BJ (cell line): ENCODE measurements at regions of chr14 and their contacts with region 1.

Region 1: GRCh38 chr14:34227834-34228649 is 234.0 kb downstream of the SPTSSA start:
- DNase-seq: no peak
- H3K4me3 ChIP-seq: no peak overlapping the region
- H3K27me3 ChIP-seq: no peaks in the 10 kb centered on the region
- CTCF ChIP-seq: peak; percentile 81

Region 2: DNA sequence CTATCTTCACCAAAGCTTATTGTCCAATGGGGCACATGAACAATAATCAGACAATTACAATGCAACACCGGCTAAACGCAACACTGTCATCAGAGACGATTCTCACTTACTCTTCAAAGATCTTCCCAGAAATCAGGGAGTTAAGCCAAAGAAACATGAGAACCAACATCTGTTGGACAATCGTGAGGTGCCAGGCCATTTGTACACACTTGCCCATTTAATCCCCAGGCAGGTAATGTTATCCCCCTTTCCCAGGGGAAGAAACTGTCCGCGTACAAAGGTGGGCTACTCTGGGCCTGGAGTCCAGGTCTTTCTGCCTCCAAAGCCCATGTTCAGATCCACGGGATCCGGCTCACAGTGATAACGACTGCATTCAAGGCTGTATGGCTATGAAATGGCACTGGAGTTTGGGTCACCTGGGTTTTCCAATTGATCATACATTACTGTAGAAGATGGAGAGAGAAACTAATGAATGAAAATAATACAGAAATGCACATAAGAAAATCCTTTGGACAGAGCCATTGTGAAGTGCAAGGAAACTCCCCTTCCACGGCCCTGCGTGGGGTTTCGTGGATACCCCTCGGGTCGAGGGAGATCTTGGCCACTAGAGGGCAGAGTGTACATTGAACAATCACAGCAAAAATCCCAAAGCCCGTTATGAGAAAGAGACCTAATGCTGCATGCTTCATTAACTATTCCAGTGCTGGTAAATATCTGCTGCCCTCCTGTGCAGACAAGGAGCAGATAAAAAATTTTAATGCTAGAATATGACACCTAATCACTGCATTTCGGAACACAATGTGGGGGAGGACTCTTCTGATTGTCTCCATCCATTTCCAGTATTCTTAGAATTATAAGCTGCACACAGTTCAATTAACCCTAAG is 388.6 kb before region 1 on chr14:
- CTCF ChIA-PET with region 1: interaction called, 27 read pairs
- POLR2A ChIA-PET with region 1: no interaction called
- DNase-seq: no peak
- H3K4me3 ChIP-seq: no peak overlapping the region
- H3K27me3 ChIP-seq: peaks cover 3% of the 10 kb centered on the region; the same call in 1 of the 2 replicates
- CTCF ChIP-seq: peak; percentile 81

Region 3: GRCh38 chr14:33848706-33849454 is 379.2 kb before region 1 on chr14:
- CTCF ChIA-PET with region 1: interaction called, 18 read pairs
- POLR2A ChIA-PET with region 1: no interaction called
- DNase-seq: no peak
- H3K4me3 ChIP-seq: no peak overlapping the region
- H3K27me3 ChIP-seq: peaks cover 4% of the 10 kb centered on the region; the same call in 1 of the 2 replicates
- CTCF ChIP-seq: peak; percentile 63

Region 4: GRCh38 chr14:34379816-34380463 is 151.9 kb after region 1 on chr14:
- CTCF ChIA-PET with region 1: no interaction called
- POLR2A ChIA-PET with region 1: no interaction called
- DNase-seq: no peak
- H3K4me3 ChIP-seq: no peak overlapping the region
- H3K27me3 ChIP-seq: peaks cover 5% of the 10 kb centered on the region; the same call in 1 of the 2 replicates
- CTCF ChIP-seq: no peak